Sciatic nerve (tissue), 2 donors: ENCODE measurements at regions of chr5 and their contacts with region 1.

Region 1: DNA sequence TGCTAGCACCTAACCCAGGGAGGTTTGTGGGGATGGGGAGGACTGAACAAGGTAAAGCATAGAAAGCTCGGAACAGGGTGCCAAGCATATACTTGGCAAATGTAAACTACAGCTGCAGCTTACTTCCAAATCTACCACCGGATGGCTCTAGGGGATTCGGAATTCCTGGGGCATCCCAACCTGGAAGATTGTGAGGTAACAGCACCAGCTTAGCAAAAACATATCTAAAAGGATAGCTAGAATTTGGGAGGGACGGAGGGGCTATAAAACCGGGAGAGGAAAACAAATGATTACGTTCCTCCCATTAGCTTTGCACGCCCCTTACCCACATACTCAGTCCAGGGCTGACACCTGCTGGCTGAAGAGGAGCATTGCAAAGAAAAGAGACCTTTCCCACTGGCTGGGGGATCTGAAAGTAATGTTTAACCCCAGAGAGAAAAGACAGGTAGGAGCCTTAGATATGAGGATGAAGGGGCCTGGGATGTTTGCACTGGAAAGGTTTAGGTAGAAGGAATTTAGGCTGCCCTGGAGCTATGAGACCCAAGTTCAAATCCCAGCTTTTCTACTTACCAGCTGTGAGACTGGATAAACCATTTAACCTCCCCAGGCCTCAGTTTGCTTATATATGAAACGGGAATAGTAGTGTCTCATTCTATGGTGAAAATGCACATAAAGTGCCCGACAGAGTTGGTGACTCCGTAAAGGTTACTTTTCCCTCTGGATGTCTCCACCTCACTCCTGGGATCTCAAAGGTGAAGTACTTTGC is 73.6 kb downstream of the FAM114A2 start:
- DNase-seq: no peak
- ATAC-seq: peak; percentile 81

Region 2: DNA sequence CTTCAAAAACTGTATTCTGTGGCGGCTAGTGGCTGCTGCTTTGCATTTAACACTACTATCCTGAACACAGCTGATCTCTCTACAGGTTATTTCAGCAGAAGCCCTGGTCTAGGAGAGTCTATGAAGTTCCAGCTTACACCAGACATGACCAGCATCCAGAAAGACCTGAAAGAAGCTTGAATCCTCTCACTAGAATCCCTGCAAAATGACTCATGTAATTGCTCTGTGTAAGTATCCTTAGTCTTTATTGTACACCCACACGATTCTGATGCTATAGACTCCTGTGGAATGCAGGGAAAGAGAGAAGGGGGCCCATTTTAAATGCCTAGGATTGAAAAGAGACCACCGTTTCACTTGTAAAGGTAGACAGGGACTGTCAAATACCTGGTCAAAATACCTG is 475.5 kb before region 1 on chr5:
- intact Hi-C with region 1: loop called (anchors 5 kb)
- DNase-seq: no peak
- ATAC-seq: no peak

Region 3: DNA sequence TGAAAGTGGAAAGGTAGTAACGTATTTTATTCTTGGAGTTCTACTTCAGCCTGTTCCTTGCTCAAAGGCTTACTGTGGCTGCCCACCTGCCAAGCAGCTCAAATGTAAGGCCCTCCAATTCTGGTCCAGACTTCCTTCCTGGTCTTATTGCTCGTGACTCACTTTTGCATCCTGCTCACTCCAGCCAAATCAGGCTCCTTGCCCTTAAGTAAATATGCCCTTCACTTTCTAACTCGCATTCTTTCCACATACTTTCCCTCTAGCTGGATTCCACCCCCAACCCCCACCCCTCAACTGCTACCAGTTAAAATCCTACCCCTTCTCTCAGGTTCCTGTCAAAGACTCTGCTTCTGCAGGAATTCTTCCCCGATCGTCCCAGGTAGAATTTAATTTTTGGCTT is 322.1 kb after region 1 on chr5:
- intact Hi-C with region 1: no loop called
- DNase-seq: no peak
- ATAC-seq: peak; percentile 53

Region 4: DNA sequence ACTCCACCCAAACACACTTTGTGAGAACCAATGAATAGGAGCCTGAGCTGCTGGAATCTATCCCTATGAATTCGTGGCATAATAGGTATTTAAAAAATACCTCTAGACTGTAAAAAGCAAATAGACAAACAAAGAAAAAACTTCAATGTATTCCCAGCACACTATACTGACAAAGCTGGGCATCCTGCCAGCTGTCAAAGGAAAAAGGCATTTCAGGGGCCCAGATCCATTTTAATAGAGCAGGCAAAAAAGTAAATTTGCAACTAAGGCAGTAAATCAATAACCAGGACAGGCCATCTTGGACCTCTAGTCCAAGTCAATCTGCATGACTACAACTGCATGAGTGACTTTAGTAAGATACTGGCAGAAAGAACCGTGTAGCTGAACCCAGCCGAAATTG is 764.5 kb after region 1 on chr5:
- intact Hi-C with region 1: no loop called
- DNase-seq: no peak
- ATAC-seq: no peak